Activated CD4-positive, alpha-beta memory T cell treated with anti-CD3 and anti-CD28 coated beads, Interleukin-2, amount 10 ng/mL, durations not matched to agents 7 days and 5 days (primary cell): ENCODE measurements at regions of chr1 and their contacts with region 1.

Region 1: DNA sequence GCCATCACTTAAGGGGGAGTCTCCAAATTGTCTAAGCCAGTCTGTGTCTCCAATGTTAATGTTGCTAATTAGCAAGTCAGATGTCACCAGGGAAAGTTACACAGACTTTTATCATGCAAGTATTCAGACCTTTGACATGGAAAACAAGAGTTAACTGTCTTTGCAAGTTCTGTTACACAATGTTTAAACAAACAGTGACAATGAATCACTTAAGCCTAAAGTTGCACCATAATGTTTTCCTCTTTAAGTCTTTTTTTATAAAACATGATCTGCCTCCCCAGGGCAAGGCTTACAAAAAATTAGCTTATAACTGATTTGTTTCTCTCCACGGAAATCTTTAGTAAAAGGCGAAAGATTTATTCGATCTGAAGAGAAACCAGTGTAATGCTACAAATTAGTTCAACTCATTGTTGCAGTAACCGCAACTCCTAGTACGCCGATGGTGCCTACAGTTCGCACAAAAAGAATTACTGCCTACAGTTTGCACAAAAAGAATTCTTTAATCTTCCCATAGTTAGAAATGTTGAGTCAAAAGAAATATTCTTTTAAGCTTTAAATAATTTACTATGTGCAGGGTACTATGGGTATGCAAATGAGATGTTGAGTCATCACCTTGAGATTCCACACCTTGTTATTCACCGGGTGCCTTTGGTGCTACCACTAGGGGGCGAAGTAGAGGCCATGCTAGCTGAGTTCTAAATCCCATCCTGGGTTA is 45.3 kb downstream of the HHAT start:
- DNase-seq: peak; percentile 77
- H3K4me3 Mint-ChIP-seq: no peak overlapping the region
- H3K27ac Mint-ChIP-seq: peak overlapping the region; percentile 72
- H3K4me1 Mint-ChIP-seq: peaks cover 19% of the 10 kb centered on the region
- H3K27me3 Mint-ChIP-seq: peaks cover 9% of the 10 kb centered on the region

Region 2: DNA sequence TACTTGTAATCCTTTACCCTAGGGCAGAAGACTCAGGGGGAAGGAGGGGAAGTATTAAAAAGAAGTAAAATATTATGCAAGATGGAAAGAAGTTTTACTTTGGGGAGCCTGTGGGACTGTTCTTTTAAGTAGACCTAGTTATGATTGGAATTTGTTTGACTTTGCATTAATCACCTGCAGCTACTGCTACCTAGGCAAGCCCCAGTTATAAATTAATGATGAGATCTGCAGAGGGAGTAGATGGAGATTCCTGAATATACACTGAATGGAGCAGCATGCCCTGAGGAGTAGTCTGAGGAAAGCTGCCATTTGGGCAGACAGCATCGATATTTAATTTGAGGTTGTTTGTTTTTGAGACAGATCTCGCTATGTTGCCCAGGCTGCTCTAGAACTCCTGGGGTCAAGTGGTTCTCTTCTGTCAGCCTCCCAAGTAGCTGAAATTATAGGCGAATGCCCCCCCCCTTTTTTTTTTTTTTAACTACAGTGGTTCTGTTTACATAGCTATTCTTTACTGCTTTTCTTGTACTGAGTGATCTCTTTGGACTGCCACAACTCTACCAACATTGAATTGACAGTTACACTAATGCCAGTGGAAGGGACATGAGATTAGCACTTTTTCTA is 222.9 kb before region 1 on chr1:
- CTCF ChIA-PET with region 1: no interaction called
- POLR2A ChIA-PET with region 1: no interaction called
- DNase-seq: no peak
- H3K4me3 Mint-ChIP-seq: no peak overlapping the region
- H3K27ac Mint-ChIP-seq: no peak overlapping the region
- H3K4me1 Mint-ChIP-seq: no peaks in the 10 kb centered on the region
- H3K27me3 Mint-ChIP-seq: peaks cover 7% of the 10 kb centered on the region

Region 3: GRCh38 chr1:210328746-210329503 is 45.1 kb before region 1 on chr1 and contains the start of gene HHAT:
- CTCF ChIA-PET with region 1: interaction called, 15 read pairs
- POLR2A ChIA-PET with region 1: interaction called, 99 read pairs
- DNase-seq: peak; percentile 60
- H3K4me3 Mint-ChIP-seq: peak within 1 kb of the TSS; percentile 93
- H3K27ac Mint-ChIP-seq: peak within 1 kb of the TSS; percentile 72
- H3K4me1 Mint-ChIP-seq: peaks cover 37% of the 10 kb centered on the region
- H3K27me3 Mint-ChIP-seq: peaks cover 28% of the 10 kb centered on the region
- total RNA-seq, gene HHAT: 0.76 to 1.3 TPM

Region 4: DNA sequence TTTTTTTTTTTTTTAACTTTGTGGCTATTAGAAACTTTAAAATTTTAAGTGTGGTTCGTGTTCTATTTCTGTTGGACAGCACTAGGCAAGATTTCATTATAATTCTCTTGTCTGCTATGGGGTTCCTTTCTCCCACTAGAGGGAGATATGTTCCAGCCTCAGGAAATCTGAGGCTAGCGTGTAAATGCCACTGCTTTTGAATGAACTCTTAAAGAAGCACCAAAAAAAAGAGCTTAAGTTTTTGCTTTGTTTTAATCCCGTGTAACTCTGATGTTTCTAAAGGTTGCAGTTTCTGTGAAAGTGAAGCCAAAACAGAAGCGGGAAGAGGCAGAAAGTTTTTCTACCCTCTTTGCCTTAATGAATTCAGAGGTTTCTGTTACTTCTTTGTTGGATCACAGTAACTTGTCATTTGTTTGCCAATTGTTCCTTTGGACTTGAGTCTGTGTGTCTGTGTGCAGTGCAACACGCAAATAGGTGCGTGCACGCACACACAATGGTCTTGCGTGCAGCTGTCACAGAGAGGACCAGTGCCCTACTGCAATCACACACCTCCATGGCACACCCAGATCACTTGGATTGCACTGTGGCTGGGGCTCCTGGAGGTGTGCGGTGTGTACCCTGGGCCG is 13.1 kb before region 1 on chr1:
- CTCF ChIA-PET with region 1: interaction called, 26 read pairs
- POLR2A ChIA-PET with region 1: interaction called, 20 read pairs
- DNase-seq: no peak
- H3K4me3 Mint-ChIP-seq: no peak overlapping the region
- H3K27ac Mint-ChIP-seq: no peak overlapping the region
- H3K4me1 Mint-ChIP-seq: peaks cover 2% of the 10 kb centered on the region
- H3K27me3 Mint-ChIP-seq: peaks cover 9% of the 10 kb centered on the region

Region 5: DNA sequence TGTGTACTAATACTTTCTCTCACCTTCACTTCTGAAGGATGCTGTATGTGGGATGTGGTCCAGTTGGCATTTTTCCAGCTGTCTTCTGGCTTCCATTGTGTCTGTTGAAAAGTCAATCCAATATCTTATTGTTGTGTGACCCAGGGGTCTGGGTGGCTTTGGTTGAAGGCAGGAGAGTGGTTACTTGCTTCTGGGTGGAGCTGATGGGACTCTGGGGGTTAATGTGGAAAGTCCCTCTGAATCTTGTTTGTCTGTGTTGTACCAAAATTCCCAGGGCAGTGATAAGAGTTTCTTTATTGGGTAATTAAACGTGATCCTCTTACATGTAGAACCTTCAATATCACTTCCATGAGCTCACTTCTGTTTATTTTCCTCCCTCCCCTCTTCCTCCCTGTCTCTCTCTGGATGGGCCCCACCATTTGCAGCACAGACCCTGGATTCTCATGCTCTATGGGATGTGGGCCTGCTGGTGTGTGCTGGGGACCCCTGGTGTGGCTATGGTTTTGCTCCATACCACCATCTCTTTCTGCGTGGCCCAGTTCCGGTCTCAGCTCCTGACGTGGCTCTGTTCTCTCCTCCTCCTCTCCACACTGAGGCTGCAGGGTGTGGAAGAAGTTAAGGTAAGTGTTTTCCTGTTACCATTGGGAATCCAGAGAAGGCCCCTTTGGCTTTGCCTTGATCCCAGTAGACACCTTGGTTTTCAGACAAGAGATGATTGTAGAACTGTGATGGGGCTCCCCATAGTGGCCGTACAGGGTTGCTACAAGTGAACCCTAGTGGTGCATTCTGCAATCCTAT is 26.2 kb after region 1 on chr1:
- CTCF ChIA-PET with region 1: interaction called, 32 read pairs
- POLR2A ChIA-PET with region 1: interaction called, 29 read pairs
- DNase-seq: peak; percentile 57
- H3K4me3 Mint-ChIP-seq: no peak overlapping the region
- H3K27ac Mint-ChIP-seq: no peak overlapping the region
- H3K4me1 Mint-ChIP-seq: peaks cover 16% of the 10 kb centered on the region
- H3K27me3 Mint-ChIP-seq: peaks cover 21% of the 10 kb centered on the region

Region 6: DNA sequence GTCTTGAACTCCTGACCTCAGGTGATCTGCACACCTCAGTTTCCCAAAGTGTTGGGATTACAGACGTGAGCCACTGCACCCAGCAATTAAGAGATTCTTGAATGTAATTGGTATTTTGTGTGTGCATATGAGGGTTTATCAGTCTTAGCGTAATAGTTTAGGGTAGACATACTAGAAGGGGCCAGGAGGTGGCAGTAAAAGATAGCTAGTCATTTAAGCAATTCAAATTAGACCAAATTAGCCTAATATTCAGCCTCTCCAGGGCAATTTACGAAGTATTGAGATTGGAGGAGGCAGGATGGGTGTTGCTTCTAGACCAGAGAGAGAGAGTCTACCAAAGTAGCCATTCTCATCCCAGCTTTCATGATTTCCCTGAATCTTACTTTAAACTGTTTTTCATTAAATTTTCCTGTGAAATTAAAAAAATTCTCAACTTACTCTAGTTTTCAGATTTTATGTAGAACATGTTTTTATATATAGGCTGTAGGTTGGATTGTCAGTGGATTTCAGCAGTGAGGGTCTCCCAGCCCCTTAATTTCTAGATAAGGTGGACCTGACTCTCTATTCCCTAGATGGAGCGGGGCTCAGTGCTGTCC is 74.4 kb after region 1 on chr1:
- CTCF ChIA-PET with region 1: interaction called, 7 read pairs
- POLR2A ChIA-PET with region 1: interaction called, 13 read pairs
- DNase-seq: no peak
- H3K4me3 Mint-ChIP-seq: no peak overlapping the region
- H3K27ac Mint-ChIP-seq: no peak overlapping the region
- H3K4me1 Mint-ChIP-seq: peaks cover 19% of the 10 kb centered on the region
- H3K27me3 Mint-ChIP-seq: peaks cover 11% of the 10 kb centered on the region